Left ventricle myocardium superior (tissue), 1 donor: ENCODE measurements at regions of chr1 and their contacts with region 1.

Region 1: DNA sequence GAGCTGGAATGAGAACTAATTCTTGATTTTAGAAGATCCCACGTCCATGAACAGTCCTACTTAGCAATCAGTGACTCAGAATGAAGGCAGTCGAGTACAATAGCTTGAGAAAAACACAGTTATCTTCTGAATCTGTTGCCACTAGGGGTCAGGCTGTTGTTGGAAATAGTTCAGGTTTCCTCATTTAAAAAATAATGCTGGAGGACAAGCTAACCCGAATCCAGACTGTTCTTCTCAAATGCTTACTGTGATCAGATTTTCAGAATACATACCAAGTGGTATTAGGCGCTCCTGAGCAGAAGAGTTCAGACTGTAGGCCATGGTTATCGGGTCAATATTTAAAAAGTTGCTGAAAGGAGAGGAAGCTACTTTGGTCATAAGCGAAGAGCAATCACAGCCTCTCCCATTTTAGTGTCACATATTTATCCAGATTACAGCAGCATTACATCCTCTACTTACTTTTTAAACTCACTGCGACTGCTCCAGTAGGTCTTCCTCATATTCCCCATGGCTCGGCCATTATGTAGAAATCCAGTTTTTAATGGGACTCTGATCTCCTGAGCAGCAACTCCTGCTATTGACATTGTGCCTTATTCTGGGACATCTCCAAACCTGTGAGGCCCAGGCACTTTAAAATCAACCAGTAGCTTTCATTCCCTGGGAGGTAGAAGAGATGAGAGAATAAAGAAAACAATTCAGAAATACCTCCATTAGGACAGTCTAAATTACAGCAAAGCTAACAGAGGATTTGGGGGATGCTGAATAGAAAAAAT is 10.9 kb downstream of the ERRFI1 start:
- DNase-seq: no peak
- ATAC-seq: peak; percentile 81

Region 2: DNA sequence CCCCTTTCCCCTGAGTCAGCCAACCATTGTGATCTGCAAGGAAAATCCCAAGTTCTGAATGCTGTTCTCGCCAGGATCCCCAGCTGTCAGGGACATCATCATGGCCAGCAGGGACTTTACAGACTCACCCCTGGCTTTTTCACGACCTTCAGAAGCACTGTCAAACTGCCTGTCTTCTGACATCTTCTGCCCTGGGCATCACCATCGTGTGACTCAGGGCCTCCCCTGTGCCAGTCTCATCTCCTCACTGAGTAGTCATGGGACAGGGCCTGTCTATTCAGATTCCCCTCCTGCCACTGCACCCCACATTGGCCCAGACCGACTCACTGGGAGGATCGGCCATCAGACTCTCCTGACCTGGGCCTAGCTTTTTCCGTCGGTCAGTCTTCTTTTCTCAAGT is 316.6 kb before region 1 on chr1:
- intact Hi-C with region 1: no loop called
- DNase-seq: no peak
- ATAC-seq: no peak

Region 3: GRCh38 chr1:8348777-8349491 is 333.7 kb after region 1 on chr1:
- intact Hi-C with region 1: loop called (anchors 10 kb)
- DNase-seq: peak; percentile 81
- ATAC-seq: peak; percentile 59